ENCODE measurements at regions of chr20 and their contacts with region 1.

Region 1: GRCh38 chr20:32484958-32485769 is 100.0 kb downstream of the NOL4L start:
- DNase-seq: no peak
- ATAC-seq: peak; percentile 80
- H3K4me3 Mint-ChIP-seq: peak overlapping the region; percentile 86
- H3K27ac Mint-ChIP-seq: peak overlapping the region; percentile 69
- H3K4me1 Mint-ChIP-seq: peaks cover 14% of the 10 kb centered on the region
- H3K27me3 Mint-ChIP-seq: no peaks in the 10 kb centered on the region
- CTCF ChIP-seq: peak; percentile 82

Region 2: DNA sequence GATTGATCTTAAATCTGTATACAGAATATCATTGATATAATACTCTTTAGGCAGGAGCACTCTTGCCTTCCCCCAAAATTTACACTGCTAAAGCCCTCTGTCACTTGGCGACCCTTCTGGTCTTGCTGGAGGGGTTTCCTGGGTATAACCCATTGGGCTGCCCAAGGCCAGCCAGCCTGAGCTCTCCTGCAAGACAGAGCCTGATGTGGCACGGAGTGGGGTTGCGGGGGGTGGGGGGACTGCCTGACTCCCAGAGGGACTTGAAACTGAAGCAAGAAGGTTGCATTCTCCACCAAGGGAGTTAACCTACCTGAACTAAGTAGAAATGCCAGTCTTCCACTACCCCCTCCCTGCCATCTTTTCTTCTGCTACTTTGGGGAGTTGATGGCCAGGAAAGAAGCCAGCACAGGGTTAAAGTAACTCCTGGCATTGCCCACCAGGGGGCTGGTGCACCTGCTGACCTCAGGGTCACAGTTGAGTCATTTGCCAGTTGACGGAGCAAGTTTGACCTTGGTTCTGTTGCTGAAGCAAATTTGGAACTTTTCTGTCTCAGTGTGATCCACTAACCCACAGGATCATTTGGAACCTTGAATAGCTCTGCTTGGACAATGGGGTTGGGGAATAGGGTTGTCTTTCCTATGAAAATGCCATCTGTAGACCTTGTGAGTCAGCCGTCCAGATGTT is 47.6 kb before region 1 on chr20:
- CTCF ChIA-PET with region 1: no interaction called
- POLR2A ChIA-PET with region 1: no interaction called
- intact Hi-C with region 1: loop called (anchors 5 kb)
- DNase-seq: no peak
- ATAC-seq: peak; percentile 62
- H3K4me3 Mint-ChIP-seq: no peak overlapping the region
- H3K27ac Mint-ChIP-seq: no peak overlapping the region
- H3K4me1 Mint-ChIP-seq: peaks cover 3% of the 10 kb centered on the region
- H3K27me3 Mint-ChIP-seq: no peaks in the 10 kb centered on the region
- CTCF ChIP-seq: no peak

Region 3: DNA sequence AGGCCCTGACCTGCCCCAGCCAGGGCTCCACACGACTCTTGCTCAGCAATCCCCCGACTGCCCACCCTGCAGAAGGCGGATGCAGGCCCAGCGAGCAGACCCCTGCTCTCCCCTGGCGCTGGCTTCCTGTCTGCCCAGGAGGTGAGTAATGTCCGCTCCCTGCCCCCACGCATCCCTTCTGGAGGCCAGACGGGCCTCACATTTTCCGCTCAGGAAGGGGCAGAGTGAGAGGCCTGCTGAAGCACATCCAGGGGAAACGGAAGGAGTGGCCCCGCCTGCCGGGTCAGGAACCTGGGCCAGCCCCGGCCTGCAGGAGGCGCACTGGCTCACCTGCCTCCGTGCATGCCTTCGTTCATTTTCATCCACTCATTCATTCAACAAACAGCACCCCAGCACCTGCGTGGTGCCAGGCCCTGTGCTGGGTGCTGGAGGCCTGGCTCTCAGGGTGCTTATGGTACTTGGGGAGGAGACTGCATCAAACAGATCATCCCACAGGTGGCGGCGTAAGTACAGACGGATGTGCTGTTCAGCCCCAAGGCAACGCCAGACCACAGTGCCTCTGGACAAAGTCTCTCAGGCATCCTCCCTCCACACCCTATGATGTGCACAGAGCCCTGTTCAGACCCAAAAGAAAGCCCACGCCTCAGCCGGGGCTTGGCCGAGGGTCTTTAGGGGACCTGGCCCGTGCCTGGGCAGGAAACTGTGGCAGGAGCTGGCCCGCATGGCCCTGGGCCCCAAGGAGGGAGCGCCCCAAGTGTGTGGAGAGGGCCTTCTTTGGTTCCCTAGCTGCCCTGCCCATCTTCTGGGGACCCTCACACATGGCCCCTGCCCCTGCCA is 14.9 kb before region 1 on chr20:
- CTCF ChIA-PET with region 1: interaction called, 3 read pairs
- POLR2A ChIA-PET with region 1: no interaction called
- intact Hi-C with region 1: loop called (anchors 2 kb)
- DNase-seq: no peak
- ATAC-seq: peak; percentile 28
- H3K4me3 Mint-ChIP-seq: no peak overlapping the region
- H3K27ac Mint-ChIP-seq: no peak overlapping the region
- H3K4me1 Mint-ChIP-seq: peaks cover 19% of the 10 kb centered on the region
- H3K27me3 Mint-ChIP-seq: no peaks in the 10 kb centered on the region
- CTCF ChIP-seq: no peak

Region 4: DNA sequence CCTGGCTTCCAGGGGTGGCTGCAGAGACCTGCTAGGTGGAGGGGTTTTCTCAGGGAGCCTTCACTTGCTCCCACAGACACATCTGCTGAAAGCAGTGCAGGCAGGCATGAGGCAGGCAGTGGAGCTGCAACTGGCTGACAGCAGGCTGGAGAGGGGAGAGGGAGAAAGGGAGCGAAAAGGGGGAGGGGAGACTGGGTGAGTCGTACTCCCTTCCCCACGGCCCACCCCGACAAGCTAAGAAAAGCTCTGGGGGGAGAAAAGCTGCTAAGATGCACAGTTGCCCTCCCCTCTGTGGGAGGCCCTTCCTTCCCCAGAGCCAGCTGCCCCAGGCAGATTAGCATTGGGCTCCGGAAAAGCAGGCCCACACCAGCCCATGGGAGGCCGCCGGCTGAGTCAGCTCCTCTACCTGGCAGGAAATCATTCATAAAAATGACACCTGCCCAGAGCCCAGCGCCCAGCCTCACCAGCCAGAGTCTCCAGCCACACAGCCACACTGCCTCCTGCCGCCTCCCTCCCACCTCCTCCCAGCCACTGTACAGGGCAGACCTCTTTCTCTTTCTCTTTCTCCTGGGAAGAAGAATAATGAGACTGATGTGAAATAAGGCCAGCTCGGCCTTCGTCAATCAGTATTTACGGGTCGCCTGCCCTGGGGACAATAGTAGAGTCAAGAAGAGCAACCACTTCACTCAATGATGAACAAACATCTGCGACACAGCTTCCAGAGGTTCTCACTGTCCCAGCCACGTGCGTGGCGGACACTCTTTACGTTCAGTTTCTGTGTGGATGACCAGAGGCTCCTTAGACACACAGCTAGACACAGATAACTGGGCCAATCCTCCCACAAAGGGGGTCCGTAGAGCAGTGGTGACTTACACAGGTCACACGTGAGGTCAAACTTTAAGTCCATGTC is 196.3 kb after region 1 on chr20:
- CTCF ChIA-PET with region 1: no interaction called
- POLR2A ChIA-PET with region 1: no interaction called
- intact Hi-C with region 1: no loop called
- DNase-seq: no peak
- ATAC-seq: no peak
- H3K4me3 Mint-ChIP-seq: no peak overlapping the region
- H3K27ac Mint-ChIP-seq: no peak overlapping the region
- H3K4me1 Mint-ChIP-seq: peaks cover 14% of the 10 kb centered on the region
- H3K27me3 Mint-ChIP-seq: no peaks in the 10 kb centered on the region
- CTCF ChIP-seq: no peak